Psoas muscle (tissue), 8 donors: ENCODE measurements at regions of chr2 and their contacts with region 1.

Region 1: GRCh38 chr2:126971481-126972278 is 73.0 kb downstream of the TEX51 start:
- DNase-seq: peak; percentile 78 to 87
- ATAC-seq: peak; percentile 92 to 97 (median 95)
- H3K4me3 ChIP-seq: peak overlapping the region; percentile 62
- H3K27ac ChIP-seq: peak overlapping the region; percentile 32
- H3K4me1 ChIP-seq: peaks cover 5% of the 10 kb centered on the region
- H3K27me3 ChIP-seq: no peaks in the 10 kb centered on the region
- CTCF ChIP-seq: peak; percentile 99

Region 2: DNA sequence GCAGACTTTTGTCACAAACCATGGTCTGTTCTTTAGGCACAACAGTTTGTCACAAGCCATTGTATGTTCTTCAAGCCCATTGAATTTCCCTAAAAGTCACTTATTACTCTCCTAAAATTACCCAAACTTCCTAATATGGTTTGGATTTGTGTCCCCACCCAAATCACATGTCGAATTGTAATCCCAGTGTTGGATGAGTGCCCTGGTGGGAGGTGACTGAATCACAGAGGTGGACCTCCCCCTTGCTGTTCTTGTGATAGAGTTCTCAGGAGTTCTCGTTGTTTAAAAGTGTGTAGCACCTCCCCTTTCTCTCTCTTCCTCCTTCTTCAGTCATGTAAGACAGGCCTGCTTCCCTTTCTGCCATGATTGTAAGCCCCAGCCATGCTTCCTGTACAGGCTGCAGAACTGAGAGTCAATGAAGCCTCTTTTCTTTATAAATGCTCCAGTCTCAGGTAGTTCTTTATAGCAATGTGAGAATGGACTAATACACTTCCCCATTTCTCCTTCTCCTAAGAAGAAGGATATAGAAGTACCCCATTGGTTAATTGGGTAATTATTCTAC is 327.0 kb before region 1 on chr2:
- intact Hi-C with region 1: loop called in 1 of 2 experiments (anchors 5 kb)
- DNase-seq: no peak
- ATAC-seq: no peak
- H3K4me3 ChIP-seq: no peak overlapping the region
- H3K27ac ChIP-seq: no peak overlapping the region
- H3K4me1 ChIP-seq: no peaks in the 10 kb centered on the region
- H3K27me3 ChIP-seq: no peaks in the 10 kb centered on the region
- CTCF ChIP-seq: no peak

Region 3: DNA sequence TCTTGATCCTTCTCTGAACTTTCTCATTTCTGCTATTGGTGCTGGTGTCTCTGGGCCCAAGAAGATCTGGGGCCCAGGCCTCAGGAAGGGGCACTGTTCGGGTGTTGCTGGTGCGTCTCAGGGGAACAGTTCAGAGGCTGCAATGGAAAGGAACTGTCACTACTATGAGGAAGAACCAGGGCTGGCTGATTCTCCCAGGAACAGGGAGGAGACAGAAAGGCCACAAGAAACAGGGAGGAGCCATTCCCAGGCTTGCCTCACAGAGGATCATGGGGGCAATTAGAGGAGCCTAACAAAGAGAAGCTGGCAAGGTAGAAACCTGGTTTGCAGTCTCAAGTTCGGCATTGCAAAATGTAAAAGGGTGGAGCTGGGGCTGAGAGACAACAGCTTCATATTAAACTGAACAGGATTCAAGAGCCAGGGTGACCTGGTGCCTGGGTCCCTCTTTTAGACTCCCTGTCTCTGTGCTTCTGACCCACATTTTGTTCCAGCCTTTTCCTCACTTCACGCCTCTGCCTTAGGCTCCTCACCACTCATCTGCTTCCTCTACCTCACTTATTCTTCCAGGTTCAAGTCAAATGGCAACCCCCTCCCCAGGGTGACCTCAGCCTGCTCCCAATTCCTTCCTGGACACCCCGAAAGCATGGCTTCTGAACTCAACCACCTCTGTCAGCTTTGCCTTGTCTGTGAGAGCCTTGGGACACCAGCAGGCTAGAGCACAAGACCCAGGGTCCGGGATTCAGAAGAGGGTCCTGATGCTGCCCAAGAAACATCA is 257.3 kb before region 1 on chr2:
- intact Hi-C with region 1: no loop called
- DNase-seq: no peak
- ATAC-seq: no peak
- H3K4me3 ChIP-seq: no peak overlapping the region
- H3K27ac ChIP-seq: no peak overlapping the region
- H3K4me1 ChIP-seq: peaks cover 6% of the 10 kb centered on the region
- H3K27me3 ChIP-seq: no peaks in the 10 kb centered on the region
- CTCF ChIP-seq: no peak

Region 4: GRCh38 chr2:126761981-126762878 is 209.4 kb before region 1 on chr2:
- intact Hi-C with region 1: no loop called
- DNase-seq: no peak
- ATAC-seq: no peak
- H3K4me3 ChIP-seq: no peak overlapping the region
- H3K27ac ChIP-seq: no peak overlapping the region
- H3K4me1 ChIP-seq: no peaks in the 10 kb centered on the region
- H3K27me3 ChIP-seq: no peaks in the 10 kb centered on the region
- CTCF ChIP-seq: no peak

Region 5: DNA sequence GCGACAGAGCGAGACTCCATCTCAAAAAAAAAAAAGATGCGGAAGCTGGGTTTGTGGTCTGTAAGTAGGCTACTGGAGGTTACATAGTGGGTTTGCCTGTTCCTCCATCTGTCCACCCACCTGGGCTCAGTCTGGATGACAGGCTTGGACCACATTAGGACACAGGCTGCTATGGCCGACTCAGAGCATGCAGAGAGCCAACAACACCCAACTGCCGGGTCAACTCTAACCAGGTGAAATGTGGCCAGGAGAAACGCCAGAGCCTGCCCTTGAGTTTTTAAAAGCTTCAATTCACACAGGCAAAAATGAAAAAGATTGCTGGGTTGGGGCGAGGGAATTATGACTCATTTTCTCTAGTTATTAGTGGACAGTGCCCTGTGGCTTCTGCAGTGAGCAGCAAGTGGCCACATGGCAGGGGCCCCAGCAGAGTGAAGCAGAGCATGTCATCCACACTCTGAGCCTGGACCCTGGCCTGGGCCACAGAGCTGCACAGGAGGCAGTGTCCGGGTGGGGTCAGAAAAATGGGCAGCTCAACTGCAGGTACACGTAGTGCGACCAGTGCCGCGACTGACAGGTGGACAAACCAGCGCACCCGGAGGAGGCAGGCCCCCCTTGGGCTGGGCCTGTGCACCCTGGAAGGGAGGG is 67.8 kb after region 1 on chr2:
- intact Hi-C with region 1: loop called in 1 of 2 experiments (anchors 5 kb)
- DNase-seq: no peak
- ATAC-seq: no peak
- H3K4me3 ChIP-seq: no peak overlapping the region
- H3K27ac ChIP-seq: no peak overlapping the region
- H3K4me1 ChIP-seq: no peaks in the 10 kb centered on the region
- H3K27me3 ChIP-seq: no peaks in the 10 kb centered on the region
- CTCF ChIP-seq: no peak